GM13977 (cell line): ENCODE measurements at regions of chr1 and their contacts with region 1.

Region 1: DNA sequence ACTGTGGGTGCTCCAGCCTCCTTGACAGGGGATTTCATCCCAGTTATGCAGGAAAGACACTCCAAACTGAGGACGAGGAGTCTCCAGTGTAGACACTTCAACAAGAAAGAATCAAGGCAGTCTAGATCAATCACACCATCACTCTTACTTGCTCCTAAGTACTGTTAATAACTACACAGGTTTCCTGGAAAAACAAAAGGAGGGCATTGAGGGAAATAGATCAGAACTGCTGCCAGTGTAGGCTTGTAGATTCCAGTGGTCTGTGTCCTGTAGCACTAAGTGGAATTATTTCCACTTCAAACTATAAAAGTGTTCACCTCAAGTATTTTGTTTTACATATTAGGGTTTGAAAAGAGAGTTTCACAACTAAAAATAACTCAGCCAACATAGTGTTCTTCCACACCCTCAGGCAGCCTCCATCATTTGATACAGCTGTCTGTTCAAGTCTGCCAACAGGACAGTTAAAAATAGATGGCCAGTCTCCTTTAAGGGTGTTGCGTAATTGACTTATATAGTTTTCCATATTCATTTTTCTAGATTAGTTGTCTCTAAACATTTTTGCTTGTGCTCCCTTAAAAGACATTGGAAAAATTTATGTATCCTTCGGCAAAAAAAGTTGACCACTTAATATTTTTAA is 32.0 kb upstream of the AGL start:
- DNase-seq: no peak
- CTCF ChIP-seq: no peak

Region 2: GRCh38 chr1:100037927-100038659 is 219.9 kb after region 1 on chr1:
- in situ Hi-C with region 1: loop called (anchors 10 kb)
- DNase-seq: peak; percentile 93
- CTCF ChIP-seq: no peak